Activated naive CD4-positive, alpha-beta T cell treated with anti-CD3 and anti-CD28 coated beads for 36 hours (primary cell): ENCODE measurements at regions of chr17 and their contacts with region 1.

Region 1: GRCh38 chr17:77404812-77405581 is 264.2 kb downstream of the SEC14L1 start:
- DNase-seq: peak; percentile 95
- H3K4me3 Mint-ChIP-seq: peak overlapping the region; percentile 79
- H3K27ac Mint-ChIP-seq: peak overlapping the region; percentile 90
- H3K4me1 Mint-ChIP-seq: peaks cover 92% of the 10 kb centered on the region
- H3K27me3 Mint-ChIP-seq: no peaks in the 10 kb centered on the region

Region 2: DNA sequence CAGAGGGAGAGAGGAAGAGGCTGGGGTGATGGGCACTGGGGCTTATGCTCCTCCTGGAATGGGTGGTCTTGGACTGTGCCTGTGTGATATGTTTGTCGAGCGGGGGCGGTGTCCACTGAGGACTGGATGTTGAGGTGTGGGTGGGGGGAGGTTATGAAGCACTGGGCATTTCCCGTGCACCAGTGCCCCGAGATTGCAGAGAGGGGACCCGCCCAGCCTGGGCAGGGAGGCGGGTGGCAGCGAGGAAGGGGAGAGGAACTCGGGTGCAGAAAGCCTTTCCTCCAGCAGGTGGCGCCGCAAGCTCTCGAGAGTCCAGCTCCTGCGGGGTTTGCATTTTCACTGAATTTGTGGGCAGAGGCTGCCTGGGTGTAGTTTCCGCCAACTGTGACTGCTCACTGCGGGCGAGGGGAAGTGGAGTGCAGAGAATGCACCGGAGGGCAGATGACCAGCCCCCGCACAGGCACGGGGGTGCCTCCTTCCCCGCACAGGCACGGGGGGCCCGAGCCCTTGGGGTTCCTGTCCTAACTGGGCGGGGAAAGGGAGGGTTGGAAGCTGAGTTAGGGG is 73.6 kb before region 1 on chr17:
- CTCF ChIA-PET with region 1: interaction called, 27 read pairs
- intact Hi-C with region 1: loop called (anchors 2 kb)
- DNase-seq: peak; percentile 98
- H3K4me3 Mint-ChIP-seq: peak overlapping the region; percentile 70
- H3K27ac Mint-ChIP-seq: no peak overlapping the region
- H3K4me1 Mint-ChIP-seq: peaks cover 37% of the 10 kb centered on the region
- H3K27me3 Mint-ChIP-seq: no peaks in the 10 kb centered on the region

Region 3: GRCh38 chr17:77391668-77392375 is 13.2 kb before region 1 on chr17:
- CTCF ChIA-PET with region 1: interaction called, 47 read pairs
- intact Hi-C with region 1: no loop called
- DNase-seq: peak; percentile 78
- H3K4me3 Mint-ChIP-seq: peak overlapping the region; percentile 61
- H3K27ac Mint-ChIP-seq: peak overlapping the region; percentile 91
- H3K4me1 Mint-ChIP-seq: peaks cover 57% of the 10 kb centered on the region
- H3K27me3 Mint-ChIP-seq: no peaks in the 10 kb centered on the region

Region 4: GRCh38 chr17:77444984-77445759 is 40.2 kb after region 1 on chr17:
- CTCF ChIA-PET with region 1: interaction called, 17 read pairs
- intact Hi-C with region 1: loop called (anchors 1 kb)
- DNase-seq: peak; percentile 87
- H3K4me3 Mint-ChIP-seq: peak overlapping the region; percentile 58
- H3K27ac Mint-ChIP-seq: peak overlapping the region; percentile 94
- H3K4me1 Mint-ChIP-seq: peaks cover 89% of the 10 kb centered on the region
- H3K27me3 Mint-ChIP-seq: no peaks in the 10 kb centered on the region

Region 5: DNA sequence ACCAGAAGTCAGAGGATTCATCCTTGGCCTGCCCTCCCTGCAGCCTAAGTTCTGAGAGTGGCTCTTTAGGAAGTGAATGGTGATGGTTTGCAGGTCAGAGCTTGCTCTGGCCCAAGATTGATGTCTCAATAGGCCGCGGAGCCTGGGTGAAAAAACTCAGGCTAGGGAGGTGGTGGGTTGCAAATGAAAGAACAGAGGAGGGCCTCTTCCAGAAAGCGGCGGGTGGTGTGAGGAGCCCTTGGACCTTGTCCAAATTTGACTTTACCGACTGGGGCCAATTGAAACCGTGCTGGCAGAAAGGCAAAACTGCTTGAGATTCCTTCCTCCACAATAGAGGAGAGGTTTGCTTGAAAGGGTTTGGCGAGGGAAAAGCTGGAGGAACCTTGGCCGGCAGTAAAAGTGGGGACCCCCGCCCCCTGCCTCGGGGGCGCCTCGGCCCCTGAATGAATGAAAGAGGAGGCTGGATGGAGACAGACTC is 67.0 kb after region 1 on chr17:
- CTCF ChIA-PET with region 1: interaction called, 12 read pairs
- intact Hi-C with region 1: loop called (anchors 1 kb)
- DNase-seq: no peak
- H3K4me3 Mint-ChIP-seq: peak overlapping the region; percentile 67
- H3K27ac Mint-ChIP-seq: peak overlapping the region; percentile 98
- H3K4me1 Mint-ChIP-seq: peaks cover 97% of the 10 kb centered on the region
- H3K27me3 Mint-ChIP-seq: no peaks in the 10 kb centered on the region

Region 6: DNA sequence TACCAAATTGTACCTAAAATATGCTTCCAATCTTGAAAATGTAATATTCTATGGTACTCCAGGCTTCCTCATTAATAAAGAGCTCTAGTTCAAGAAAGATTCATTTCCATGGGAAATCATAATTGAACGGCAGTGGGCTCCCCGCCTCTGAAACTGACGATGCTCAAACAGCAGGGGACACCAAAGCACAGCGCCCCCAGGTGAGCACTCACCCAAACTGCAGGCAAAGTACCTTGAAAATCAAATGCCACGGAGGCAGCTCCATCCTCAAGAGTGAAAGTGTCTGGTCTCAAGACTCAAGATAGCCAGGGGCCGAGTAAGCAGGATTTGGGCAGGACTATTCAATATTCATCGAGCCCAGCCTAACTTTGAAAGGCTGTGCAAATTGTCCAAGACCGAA is 336.1 kb after region 1 on chr17:
- CTCF ChIA-PET with region 1: no interaction called
- intact Hi-C with region 1: loop called (anchors 2 kb)
- DNase-seq: peak; percentile 83
- H3K4me3 Mint-ChIP-seq: no peak overlapping the region
- H3K27ac Mint-ChIP-seq: no peak overlapping the region
- H3K4me1 Mint-ChIP-seq: no peaks in the 10 kb centered on the region
- H3K27me3 Mint-ChIP-seq: no peaks in the 10 kb centered on the region

Region 7: DNA sequence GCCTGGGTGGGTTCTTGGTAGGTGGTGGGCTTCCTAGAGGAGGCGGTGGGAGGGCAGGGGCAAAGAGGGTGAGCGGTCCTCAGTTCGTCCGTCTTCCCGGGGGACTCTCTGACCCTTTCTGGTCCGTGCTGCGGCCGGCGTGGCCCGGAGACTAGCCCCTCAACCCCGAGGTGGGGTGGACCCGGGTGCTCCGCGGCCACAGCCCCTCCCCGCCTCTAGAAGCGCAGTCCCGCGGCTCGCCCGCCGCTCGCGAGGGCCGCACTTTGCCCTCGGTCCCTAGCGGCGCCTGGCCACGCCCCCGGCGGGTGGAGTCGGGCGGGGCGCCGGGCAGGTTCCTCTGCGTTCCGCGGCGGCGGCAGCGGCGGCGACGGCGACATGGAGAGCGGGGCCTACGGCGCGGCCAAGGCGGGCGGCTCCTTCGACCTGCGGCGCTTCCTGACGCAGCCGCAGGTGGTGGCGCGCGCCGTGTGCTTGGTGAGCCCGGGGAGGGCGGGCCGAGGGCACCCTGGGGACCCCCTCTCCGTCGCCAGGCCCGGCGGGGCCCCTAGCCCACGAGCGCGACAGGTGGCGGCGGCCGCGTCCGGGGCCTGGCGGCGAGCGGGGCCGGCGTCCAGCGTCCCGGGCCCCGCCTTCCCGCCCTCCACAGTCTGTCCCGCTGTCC is 763.4 kb after region 1 on chr17 and contains the start of gene SYNGR2:
- CTCF ChIA-PET with region 1: no interaction called
- intact Hi-C with region 1: no loop called
- DNase-seq: peak; percentile 87
- H3K4me3 Mint-ChIP-seq: peak within 1 kb of the TSS; percentile 75
- H3K27ac Mint-ChIP-seq: peak within 1 kb of the TSS; percentile 85
- H3K4me1 Mint-ChIP-seq: peaks cover 37% of the 10 kb centered on the region
- H3K27me3 Mint-ChIP-seq: no peaks in the 10 kb centered on the region
- total RNA-seq, gene SYNGR2: 96.3 to 103 TPM